ENCODE measurements at regions of chr11 and their contacts with region 1.

Region 1: DNA sequence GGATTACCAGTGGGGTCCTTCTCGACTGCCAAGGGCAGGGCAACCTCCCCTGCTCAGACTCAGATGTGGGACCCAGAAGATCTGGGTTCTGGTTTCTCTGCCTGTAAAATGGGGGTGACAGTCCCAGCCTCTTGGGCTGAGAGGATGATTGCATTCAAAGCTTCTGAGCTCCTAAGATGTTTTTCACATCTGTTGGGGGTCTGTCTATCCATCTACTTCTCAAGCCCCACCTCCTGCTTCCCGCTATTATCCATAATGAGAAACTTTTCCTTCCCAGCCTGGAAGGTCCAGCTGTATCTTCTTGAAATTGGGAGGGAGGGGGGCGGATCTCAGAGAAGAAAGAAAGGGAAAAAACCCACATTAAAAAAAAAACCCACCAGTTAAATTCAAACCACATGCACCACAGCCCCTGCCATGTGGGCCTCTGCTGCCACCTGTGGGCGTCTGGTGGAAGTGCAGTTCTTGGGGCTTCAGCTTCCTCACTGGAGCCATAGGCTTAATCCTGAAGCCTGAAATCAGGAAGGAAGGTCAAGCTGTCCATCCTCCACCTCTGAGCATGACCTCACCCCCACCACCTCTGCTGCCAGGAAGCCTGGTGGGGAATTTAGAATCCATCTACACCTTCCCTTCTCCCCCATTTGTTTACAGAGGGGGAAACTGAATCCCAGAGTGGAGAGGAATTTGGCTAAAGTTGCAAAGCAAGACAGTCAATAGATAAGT is 27.3 kb downstream of the ARHGEF17 start:
- DNase-seq: peak; percentile 86
- ATAC-seq: peak; percentile 63
- H3K4me3 Mint-ChIP-seq: no peak overlapping the region
- H3K27ac Mint-ChIP-seq: no peak overlapping the region
- H3K4me1 Mint-ChIP-seq: no peaks in the 10 kb centered on the region
- H3K27me3 Mint-ChIP-seq: no peaks in the 10 kb centered on the region

Region 2: GRCh38 chr11:73295231-73295995 is 40.0 kb before region 1 on chr11:
- CTCF ChIA-PET with region 1: interaction called, 13 read pairs
- POLR2A ChIA-PET with region 1: no interaction called
- intact Hi-C with region 1: loop called (anchors 1 kb)
- DNase-seq: peak; percentile 89
- ATAC-seq: peak; percentile 97
- H3K4me3 Mint-ChIP-seq: no peak overlapping the region
- H3K27ac Mint-ChIP-seq: no peak overlapping the region
- H3K4me1 Mint-ChIP-seq: peaks cover 2% of the 10 kb centered on the region
- H3K27me3 Mint-ChIP-seq: peaks cover 1% of the 10 kb centered on the region

Region 3: GRCh38 chr11:73325036-73325981 is 10.1 kb before region 1 on chr11:
- CTCF ChIA-PET with region 1: interaction called, 16 read pairs
- POLR2A ChIA-PET with region 1: no interaction called
- intact Hi-C with region 1: no loop called
- DNase-seq: no peak
- ATAC-seq: no peak
- H3K4me3 Mint-ChIP-seq: no peak overlapping the region
- H3K27ac Mint-ChIP-seq: no peak overlapping the region
- H3K4me1 Mint-ChIP-seq: peaks cover 7% of the 10 kb centered on the region
- H3K27me3 Mint-ChIP-seq: no peaks in the 10 kb centered on the region

Region 4: GRCh38 chr11:73493956-73494598 is 158.7 kb after region 1 on chr11:
- CTCF ChIA-PET with region 1: no interaction called
- POLR2A ChIA-PET with region 1: no interaction called
- intact Hi-C with region 1: no loop called
- DNase-seq: no peak
- ATAC-seq: no peak
- H3K4me3 Mint-ChIP-seq: no peak overlapping the region
- H3K27ac Mint-ChIP-seq: no peak overlapping the region
- H3K4me1 Mint-ChIP-seq: no peaks in the 10 kb centered on the region
- H3K27me3 Mint-ChIP-seq: no peaks in the 10 kb centered on the region

Measured in activated CD4-positive, alpha-beta T cell treated with anti-CD3 and anti-CD28 coated beads for 36 hours (primary cell).